ENCODE measurements at regions of chr2 and their contacts with region 1.

Region 1: DNA sequence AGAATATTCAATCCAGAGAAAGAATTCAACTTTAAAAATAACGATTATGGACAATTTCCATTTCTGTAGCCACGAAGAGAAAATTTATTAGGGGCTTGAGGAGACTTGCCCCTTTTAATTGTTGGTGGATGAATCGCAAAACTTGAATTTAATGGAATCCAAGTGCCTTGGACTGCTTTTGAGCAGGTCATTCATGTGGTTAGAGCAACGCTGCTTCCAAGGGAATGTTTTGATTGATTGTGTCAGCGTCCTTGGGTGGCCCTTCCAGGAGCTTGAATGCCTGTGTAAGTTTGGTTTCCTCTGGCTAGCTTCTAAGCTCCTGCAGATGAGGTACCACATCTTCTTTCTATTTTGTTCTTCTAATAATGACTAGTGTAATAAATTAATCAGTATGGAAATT is 213.4 kb downstream of the LTBP1 start:
- DNase-seq: no peak
- ATAC-seq: no peak
- H3K4me3 ChIP-seq: no peak overlapping the region
- H3K27ac ChIP-seq: no peak overlapping the region
- H3K4me1 ChIP-seq: peaks cover 0 to 7% (median 2%) of the 10 kb centered on the region in 12 donors
- H3K27me3 ChIP-seq: no peaks in the 10 kb centered on the region
- CTCF ChIP-seq: no peak
- POLR2A ChIP-seq: no peak

Region 2: DNA sequence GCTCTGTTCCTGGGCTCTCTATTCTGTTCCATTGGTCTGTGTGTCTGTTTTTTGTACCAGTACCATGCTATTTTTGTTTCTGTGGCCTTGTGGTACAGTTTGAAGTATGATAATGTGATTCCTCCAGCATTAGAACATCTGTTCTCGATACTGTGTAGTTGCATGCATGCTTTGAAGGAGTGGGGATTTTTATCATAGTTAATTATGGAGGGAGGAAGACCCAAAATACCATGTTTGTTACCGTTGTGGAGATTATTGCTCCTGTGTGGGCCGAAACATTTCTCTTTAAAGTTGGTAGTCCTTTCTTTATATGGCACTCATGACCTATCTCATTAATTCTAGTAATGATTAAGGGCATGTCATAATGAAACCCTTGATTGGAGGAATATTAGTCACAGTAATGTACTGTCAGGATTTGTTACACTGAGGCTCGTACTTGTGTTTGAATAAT is 444.8 kb before region 1 on chr2:
- intact Hi-C with region 1: loop called in 1 of 10 experiments (anchors 5 kb)
- DNase-seq: no peak
- ATAC-seq: peak; percentile 41 to 76 (median 60)
- H3K4me3 ChIP-seq: no peak overlapping the region
- H3K27ac ChIP-seq: peak overlapping the region in 11 of 12 donors; percentile 44 to 89 (median 65)
- H3K4me1 ChIP-seq: peaks cover 0 to 70% (median 45%) of the 10 kb centered on the region in 12 donors
- H3K27me3 ChIP-seq: no peaks in the 10 kb centered on the region
- CTCF ChIP-seq: no peak
- POLR2A ChIP-seq: no peak

Region 3: DNA sequence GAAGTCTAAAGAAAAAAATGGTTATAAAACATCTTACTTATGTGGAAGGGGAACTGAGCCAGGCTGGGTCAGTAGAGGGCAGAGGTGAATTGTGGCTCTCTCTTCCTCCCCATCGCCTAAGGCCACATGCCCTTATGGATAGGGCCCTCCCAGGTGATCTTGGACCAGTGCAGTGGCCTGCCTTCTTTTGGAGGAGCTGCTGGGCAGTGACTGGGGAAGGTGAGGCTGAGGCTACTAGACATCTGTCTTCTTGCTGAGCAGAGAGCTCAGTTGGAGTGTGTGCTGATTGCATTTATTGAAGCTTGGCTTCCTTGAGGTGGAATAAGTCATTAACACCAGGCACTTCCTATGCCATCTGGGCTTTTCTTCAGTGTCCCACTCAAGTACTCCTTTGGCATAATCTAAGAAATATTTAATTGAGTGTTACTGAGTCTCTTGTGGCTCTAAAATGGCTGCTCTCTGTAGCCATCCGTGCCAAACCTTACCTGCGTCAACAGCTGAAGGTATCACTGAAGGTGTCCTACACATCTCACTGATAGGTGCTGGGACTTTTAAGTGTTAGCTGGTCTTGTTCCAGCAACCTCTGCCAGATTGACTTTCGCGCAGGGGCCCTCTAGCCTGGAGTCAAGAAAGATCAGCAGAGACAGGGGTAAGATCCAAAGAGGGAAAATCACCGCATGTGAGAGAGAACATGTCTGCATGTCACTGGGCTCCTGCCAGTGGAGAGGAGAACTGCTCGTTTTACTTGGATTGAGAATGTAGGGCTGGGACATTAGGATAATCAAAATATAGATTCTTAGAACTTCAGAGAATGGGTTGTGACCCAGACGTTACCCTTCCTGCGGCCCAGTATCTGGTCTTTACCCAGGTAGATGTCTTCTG is 42.7 kb after region 1 on chr2:
- intact Hi-C with region 1: no loop called
- DNase-seq: no peak
- ATAC-seq: peak in 3 of 4 donors; percentile 39 to 59 (median 52)
- H3K4me3 ChIP-seq: no peak overlapping the region
- H3K27ac ChIP-seq: peak overlapping the region in 5 of 12 donors; percentile 13 to 62 (median 29)
- H3K4me1 ChIP-seq: peaks cover 0 to 22% (median 6%) of the 10 kb centered on the region in 12 donors
- H3K27me3 ChIP-seq: no peaks in the 10 kb centered on the region
- CTCF ChIP-seq: no peak
- POLR2A ChIP-seq: no peak

Region 4: GRCh38 chr2:33256162-33256755 is 96.1 kb after region 1 on chr2:
- intact Hi-C with region 1: no loop called
- DNase-seq: no peak
- ATAC-seq: no peak
- H3K4me3 ChIP-seq: no peak overlapping the region
- H3K27ac ChIP-seq: no peak overlapping the region
- H3K4me1 ChIP-seq: peaks cover 0 to 7% (median 0%) of the 10 kb centered on the region in 12 donors
- H3K27me3 ChIP-seq: no peaks in the 10 kb centered on the region
- CTCF ChIP-seq: no peak
- POLR2A ChIP-seq: no peak

Region 5: DNA sequence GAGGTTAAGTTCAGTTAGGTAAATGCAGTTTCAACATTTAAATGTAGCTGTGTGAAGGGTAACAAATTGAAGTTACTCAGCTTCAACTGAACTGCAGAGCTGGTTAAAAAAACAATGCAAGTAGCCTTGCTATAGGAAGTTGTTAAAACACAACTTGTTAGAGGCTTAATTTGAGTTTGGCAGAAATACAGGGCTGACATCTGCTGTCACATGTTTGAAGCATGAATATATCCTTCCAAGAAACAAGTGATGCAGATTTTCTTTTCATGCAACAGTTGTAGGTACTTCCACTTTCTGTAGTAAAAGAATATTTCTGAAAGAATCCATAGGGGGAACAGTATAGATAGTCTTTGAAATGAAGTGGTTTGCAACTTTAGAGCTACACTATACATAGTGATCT is 107.6 kb after region 1 on chr2:
- intact Hi-C with region 1: no loop called
- DNase-seq: no peak
- ATAC-seq: no peak
- H3K4me3 ChIP-seq: no peak overlapping the region
- H3K27ac ChIP-seq: peak overlapping the region in 1 of 12 donors; percentile 48
- H3K4me1 ChIP-seq: peaks cover 0 to 24% (median 9%) of the 10 kb centered on the region in 12 donors
- H3K27me3 ChIP-seq: no peaks in the 10 kb centered on the region
- CTCF ChIP-seq: no peak
- POLR2A ChIP-seq: no peak

Region 6: GRCh38 chr2:34365932-34366331 is 1205.7 kb after region 1 on chr2:
- intact Hi-C with region 1: no loop called
- DNase-seq: no peak
- ATAC-seq: no peak
- H3K4me3 ChIP-seq: no peak overlapping the region
- H3K27ac ChIP-seq: no peak overlapping the region
- H3K4me1 ChIP-seq: no peaks in the 10 kb centered on the region
- H3K27me3 ChIP-seq: peaks cover 0 to 7% (median 0%) of the 10 kb centered on the region in 9 donors
- CTCF ChIP-seq: no peak
- POLR2A ChIP-seq: no peak